ENCODE measurements at regions of chr12 and their contacts with region 1.

Region 1: DNA sequence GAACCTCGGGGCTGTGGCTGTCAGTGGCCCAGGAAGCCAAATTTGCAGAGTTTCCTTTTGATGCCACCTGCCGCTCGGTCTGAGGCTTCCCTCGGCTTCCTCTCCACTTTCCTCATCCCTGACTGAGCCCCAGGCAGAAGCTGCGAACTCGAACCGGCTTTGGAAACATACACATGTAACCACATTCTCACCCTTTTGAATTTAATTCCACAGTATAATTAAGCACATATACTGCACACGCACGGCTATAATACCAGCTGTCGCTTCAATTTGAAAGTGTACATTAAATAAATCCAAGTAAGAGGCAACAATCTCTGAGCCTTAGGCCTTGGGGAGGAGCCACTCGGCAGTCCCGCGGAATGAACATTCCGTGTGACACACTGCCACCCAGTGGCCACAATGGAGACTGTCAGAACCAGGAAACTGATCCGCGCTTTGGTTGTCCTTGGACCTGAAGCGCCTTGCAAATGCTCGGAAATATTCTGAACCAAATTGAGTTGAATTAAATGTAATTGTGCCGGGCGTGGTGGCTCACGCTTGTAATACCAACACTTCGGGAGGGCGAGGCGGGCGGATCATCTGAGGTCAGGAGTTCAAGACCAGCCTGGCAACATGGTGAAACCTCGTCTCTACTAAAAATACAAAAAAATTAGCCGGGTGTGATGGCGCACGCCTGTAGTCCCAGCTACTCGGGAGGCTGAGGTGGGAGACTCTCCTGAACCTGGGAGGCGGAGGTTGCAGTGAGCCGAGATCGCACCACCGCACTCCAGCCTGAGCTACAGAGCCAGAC is 117.9 kb upstream of the TMPO start:
- ATAC-seq: peak; percentile 90 to 95 (median 93)
- H3K4me3 ChIP-seq: peak overlapping the region; percentile 8 to 37 (median 23)
- H3K27ac ChIP-seq: no peak overlapping the region
- H3K4me1 ChIP-seq: peaks cover 11 to 14% of the 10 kb centered on the region in 2 donors

Region 2: DNA sequence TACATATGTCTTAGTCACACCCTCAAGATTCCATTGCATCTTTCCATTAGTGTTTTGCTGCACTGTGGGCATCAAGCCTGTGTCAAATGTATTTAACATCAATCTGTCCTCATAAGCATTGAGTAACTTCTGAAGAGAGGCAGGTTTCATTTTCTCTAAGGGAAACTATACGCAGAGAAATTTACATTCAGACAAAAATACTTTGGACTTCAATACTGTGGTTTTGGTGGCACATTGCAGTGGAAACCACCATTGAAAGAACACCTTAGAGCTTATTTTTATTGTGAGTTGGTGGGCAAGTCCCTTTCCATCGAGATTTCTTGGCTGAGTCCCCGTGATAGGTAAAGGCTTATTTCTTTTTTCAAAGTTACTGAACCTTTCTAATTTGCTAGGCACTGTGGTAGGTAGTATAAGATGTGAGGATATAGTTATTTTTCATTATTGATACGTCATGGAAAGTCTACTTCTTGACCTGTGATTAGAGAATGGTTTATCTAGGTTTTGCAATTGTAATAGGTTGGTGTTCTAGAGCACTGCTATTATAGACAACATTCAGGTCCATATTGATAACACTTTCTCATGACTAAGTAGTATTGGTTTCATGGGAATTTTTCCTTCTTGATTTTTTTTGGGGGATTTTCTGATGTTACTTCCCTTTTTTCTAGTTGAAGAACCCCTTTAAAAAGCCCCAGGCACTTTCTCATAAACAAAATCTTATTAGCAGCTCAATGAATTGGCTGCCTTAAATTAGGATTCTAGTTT is 1826.2 kb before region 1 on chr12:
- in situ Hi-C with region 1: loop called in 6 of 9 experiments (anchors 10 to 25 kb)
- ATAC-seq: no peak
- H3K4me3 ChIP-seq: no peak overlapping the region
- H3K27ac ChIP-seq: no peak overlapping the region
- H3K4me1 ChIP-seq: no peaks in the 10 kb centered on the region

Region 3: DNA sequence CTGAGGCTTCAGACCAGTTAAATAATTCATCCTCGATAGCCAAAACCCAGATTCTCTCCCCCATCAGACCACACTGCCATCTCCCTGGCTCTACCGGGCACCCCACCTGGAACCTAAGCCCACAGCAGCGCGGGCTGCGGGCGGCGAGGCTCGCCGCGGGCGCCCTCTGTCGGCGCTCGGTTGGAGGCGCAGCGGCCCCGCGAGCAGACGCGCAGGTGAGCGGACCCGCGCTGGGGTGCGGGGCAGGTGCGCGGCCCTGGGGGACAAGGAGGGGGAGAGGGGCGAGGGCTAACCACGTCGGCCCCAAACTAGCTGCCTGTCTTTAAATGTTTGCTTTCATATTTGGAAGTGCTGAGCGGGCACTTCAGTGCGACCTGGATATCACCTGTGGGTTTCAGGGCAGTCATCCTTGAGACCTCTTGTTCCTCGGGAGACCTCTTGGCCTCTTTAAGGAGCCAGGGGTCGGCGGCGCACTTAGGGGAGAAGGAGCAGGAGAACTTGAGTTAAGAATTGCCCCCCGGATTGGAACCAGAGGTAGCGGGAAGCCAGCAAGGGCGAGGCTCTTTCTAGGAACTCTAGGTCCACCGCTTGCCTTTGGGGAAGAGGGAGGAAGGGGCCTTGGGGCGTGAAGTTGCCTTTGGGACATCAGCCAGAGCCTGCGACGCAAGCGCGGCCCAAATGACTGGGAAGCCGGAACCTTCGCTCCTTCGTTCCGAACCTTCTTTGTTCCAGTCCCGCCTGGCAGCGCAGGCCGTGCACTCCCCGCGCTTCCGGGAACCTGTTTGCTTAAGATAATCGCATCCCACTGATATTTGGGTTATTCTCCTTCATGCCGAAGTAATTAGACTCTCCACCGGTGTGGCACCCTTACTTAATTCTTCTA is 1411.8 kb before region 1 on chr12:
- in situ Hi-C with region 1: loop called in 5 of 9 experiments (anchors 25 kb)
- ATAC-seq: peak; percentile 46 to 93 (median 60)
- H3K4me3 ChIP-seq: peak overlapping the region; percentile 13 to 40 (median 36)
- H3K27ac ChIP-seq: no peak overlapping the region
- H3K4me1 ChIP-seq: peaks cover 31 to 33% of the 10 kb centered on the region in 2 donors

Region 4: DNA sequence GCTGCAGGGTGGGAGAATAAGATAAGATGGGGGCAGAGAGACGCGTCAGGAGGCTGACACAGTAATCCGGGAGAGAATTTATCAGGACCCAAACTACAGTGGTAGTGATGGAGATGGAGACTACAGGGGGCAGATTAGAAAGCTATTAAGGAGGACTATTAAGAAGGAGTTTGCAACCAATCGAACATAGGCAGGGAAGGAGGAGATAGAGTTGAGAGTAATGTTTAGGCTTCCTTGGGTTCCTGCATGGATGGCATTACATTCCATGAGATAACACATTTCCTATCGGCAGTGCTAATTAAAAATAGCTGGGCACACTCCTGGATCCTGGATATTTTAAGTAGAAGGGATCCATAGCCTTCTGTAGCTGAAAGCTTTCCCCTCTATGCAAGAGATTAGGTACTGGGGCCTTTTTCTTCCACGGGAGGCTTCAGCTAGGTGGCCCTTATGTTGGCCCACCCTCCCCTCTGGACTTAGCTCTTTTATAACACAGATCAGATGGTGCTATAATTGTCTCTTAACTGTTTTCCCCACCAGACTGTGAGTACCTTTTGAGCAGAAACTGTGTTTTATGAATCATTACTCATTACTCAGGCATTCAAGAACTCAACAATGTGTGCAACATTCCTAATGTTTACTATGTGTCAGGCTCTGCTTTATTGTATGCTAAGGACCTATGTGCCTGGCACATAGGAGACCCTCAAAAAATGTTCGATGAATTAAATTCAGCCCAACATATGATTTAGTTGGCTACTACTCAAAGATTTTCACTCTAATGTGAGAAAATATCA is 821.9 kb before region 1 on chr12:
- in situ Hi-C with region 1: loop called in 1 of 9 experiments (anchors 25 kb)
- ATAC-seq: peak in 2 of 8 experiments; percentile 22 to 53
- H3K4me3 ChIP-seq: no peak overlapping the region
- H3K27ac ChIP-seq: no peak overlapping the region
- H3K4me1 ChIP-seq: no peaks in the 10 kb centered on the region

Region 5: DNA sequence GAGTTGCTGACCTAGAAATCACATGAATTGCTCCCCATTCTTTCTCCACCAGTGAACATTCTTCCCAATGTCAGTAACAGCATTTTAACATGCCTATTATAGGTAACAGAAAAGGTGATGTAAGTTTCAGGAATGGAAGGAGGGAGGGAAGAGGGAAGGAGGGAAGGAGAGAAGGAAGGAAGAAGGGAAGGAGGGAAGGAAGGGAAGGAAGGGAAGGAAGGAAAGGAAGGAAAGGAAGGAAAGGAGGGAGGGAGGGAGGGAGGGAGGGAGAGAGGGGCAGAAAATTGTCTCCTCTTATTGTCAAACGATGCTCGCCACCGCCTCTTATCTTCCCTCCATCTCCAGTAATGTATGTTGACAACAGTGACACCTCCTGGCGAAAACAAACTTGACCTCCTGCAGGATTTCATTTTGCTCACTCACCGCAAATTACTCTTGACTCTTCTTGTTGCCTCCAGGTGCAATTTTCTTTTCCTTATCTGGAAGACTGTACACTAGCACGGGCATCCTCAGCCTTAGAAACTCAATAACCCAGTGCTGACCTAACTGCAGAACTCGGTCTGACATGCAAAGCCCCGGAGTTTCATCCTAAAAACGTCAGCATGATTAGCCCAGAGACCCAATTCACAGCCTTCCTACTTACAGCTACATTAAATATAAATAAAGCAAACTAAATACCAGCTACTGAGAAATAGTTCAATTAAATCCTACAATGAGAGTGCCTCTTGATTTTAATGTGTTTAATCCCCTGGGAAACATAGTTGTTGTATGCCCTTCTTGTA is 394.6 kb before region 1 on chr12:
- in situ Hi-C with region 1: loop called in 1 of 9 experiments (anchors 25 kb)
- ATAC-seq: peak in 5 of 8 experiments; percentile 21 to 69 (median 49)
- H3K4me3 ChIP-seq: no peak overlapping the region
- H3K27ac ChIP-seq: no peak overlapping the region
- H3K4me1 ChIP-seq: peaks cover 10 to 15% of the 10 kb centered on the region in 2 donors

Region 6: DNA sequence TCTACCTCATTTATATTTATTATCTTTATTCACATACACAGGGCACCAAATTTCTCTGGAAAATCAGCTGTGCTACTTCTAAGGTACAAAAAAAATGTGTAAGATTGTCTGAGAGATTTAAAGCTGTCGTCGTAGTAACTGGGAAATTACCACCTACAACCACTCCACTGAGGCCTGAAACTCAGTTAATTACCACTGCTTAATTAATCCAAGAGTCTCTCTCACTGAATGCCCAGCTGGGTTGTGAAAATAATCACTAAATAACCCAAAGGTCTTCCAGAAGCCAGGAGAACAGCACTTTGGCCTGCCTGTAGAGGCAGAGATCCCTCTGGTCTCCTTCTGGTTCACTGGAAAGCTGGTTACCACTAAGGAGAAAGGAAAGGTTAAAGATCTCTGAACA is 89.4 kb before region 1 on chr12:
- in situ Hi-C with region 1: no loop called
- ATAC-seq: no peak
- H3K4me3 ChIP-seq: no peak overlapping the region
- H3K27ac ChIP-seq: no peak overlapping the region
- H3K4me1 ChIP-seq: no peaks in the 10 kb centered on the region

Region 7: GRCh38 chr12:98719515-98720504 is 322.3 kb after region 1 on chr12:
- in situ Hi-C with region 1: no loop called
- ATAC-seq: no peak
- H3K4me3 ChIP-seq: no peak overlapping the region
- H3K27ac ChIP-seq: no peak overlapping the region
- H3K4me1 ChIP-seq: no peaks in the 10 kb centered on the region